Adrenal gland (tissue), 19 donors: ENCODE measurements at regions of chr11 and their contacts with region 1.

Region 1: GRCh38 chr11:41461057-41461681 is 1.7 kb upstream of the LRRC4C start:
- DNase-seq: no peak
- H3K4me3 ChIP-seq: no peak overlapping the region
- H3K27ac ChIP-seq: no peak overlapping the region
- H3K4me1 ChIP-seq: no peaks in the 10 kb centered on the region
- H3K27me3 ChIP-seq: no peaks in the 10 kb centered on the region
- CTCF ChIP-seq: peak; percentile 66 to 80 (median 72)
- POLR2A ChIP-seq: no peak

Region 2: DNA sequence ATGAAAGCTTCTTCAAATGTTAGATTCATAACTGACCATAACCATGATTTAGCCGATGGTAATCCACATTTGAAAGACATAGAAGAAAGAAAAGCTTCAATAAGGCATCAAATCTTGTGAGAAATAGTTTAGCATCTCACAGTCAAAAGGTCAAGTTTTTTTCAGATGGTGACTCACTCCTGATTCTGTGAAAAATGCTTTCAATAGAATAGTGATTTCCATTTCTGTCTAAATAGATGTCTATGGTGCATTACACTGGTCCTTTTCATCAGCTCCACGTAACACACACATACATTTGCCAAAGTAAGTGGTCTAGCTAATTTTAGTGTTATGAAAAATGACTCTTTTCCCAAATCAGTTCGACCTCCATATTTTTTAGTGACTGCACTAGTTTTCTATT is 140.9 kb before region 1 on chr11:
- intact Hi-C with region 1: no loop called
- DNase-seq: no peak
- H3K4me3 ChIP-seq: no peak overlapping the region
- H3K27ac ChIP-seq: no peak overlapping the region
- H3K4me1 ChIP-seq: no peaks in the 10 kb centered on the region
- H3K27me3 ChIP-seq: no peaks in the 10 kb centered on the region
- CTCF ChIP-seq: no peak
- POLR2A ChIP-seq: no peak

Region 3: DNA sequence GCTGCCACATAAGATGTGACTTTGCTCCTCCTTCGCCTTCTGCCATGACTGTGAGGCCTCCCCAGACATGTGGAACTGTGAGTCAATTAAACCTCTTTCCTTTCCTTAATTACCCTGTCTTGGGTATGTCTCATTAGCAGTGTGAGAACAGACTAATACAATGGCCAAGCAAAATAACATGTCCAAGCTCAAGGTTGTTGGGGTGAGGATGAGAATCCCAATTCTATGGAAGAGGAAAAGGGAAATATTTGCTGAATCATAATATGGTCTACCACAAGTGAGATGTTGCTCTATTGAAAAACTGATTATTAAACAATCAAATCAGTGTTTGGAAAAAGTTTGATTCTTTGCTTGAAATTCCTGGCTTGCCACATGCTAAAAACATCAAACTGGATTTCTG is 47.0 kb after region 1 on chr11:
- intact Hi-C with region 1: no loop called
- DNase-seq: no peak
- H3K4me3 ChIP-seq: no peak overlapping the region
- H3K27ac ChIP-seq: no peak overlapping the region
- H3K4me1 ChIP-seq: no peaks in the 10 kb centered on the region
- H3K27me3 ChIP-seq: no peaks in the 10 kb centered on the region
- CTCF ChIP-seq: no peak
- POLR2A ChIP-seq: no peak

Region 4: DNA sequence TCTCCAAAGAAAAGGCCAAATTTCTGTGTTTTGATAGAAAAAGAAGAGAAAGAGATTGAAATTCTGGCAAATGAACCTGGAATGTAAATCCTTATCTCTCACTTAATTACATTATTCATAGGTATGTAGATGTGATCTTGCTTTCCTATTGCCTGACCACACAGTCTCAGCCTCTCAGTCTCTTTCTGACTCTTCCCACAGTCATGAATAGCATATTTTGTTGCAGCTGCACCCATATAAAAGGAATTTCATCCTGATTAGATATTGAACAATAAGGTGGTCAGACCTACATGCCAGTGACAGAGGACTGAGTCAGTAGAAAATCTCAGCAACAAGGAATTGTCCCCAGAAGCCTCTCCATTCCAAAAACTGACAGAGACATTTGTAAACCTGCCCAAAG is 61.2 kb after region 1 on chr11:
- intact Hi-C with region 1: no loop called
- DNase-seq: no peak
- H3K4me3 ChIP-seq: no peak overlapping the region
- H3K27ac ChIP-seq: no peak overlapping the region
- H3K4me1 ChIP-seq: no peaks in the 10 kb centered on the region
- H3K27me3 ChIP-seq: no peaks in the 10 kb centered on the region
- CTCF ChIP-seq: no peak
- POLR2A ChIP-seq: no peak

Region 5: GRCh38 chr11:42524534-42525227 is 1063.5 kb after region 1 on chr11:
- intact Hi-C with region 1: loop called (anchors 10 kb)
- DNase-seq: peak; percentile 54 to 78 (median 69)
- H3K4me3 ChIP-seq: no peak overlapping the region
- H3K27ac ChIP-seq: peak overlapping the region in 1 of 5 donors; percentile 13
- H3K4me1 ChIP-seq: peaks cover 0 to 12% of the 10 kb centered on the region in 2 donors
- H3K27me3 ChIP-seq: no peaks in the 10 kb centered on the region
- CTCF ChIP-seq: peak; percentile 59 to 88 (median 78)
- POLR2A ChIP-seq: no peak